PC-9 (cell line): ENCODE measurements at regions of chr6 and their contacts with region 1.

Region 1: GRCh38 chr6:24646782-24647181 is 791 bp upstream of the KIAA0319 start:
- DNase-seq: peak; percentile 61 to 97
- H3K4me3 ChIP-seq: peak overlapping the region; percentile 76
- H3K27ac ChIP-seq: peak overlapping the region; percentile 97
- H3K4me1 ChIP-seq: peaks cover 42% of the 10 kb centered on the region
- H3K27me3 ChIP-seq: no peaks in the 10 kb centered on the region
- CTCF ChIP-seq: no peak

Region 2: DNA sequence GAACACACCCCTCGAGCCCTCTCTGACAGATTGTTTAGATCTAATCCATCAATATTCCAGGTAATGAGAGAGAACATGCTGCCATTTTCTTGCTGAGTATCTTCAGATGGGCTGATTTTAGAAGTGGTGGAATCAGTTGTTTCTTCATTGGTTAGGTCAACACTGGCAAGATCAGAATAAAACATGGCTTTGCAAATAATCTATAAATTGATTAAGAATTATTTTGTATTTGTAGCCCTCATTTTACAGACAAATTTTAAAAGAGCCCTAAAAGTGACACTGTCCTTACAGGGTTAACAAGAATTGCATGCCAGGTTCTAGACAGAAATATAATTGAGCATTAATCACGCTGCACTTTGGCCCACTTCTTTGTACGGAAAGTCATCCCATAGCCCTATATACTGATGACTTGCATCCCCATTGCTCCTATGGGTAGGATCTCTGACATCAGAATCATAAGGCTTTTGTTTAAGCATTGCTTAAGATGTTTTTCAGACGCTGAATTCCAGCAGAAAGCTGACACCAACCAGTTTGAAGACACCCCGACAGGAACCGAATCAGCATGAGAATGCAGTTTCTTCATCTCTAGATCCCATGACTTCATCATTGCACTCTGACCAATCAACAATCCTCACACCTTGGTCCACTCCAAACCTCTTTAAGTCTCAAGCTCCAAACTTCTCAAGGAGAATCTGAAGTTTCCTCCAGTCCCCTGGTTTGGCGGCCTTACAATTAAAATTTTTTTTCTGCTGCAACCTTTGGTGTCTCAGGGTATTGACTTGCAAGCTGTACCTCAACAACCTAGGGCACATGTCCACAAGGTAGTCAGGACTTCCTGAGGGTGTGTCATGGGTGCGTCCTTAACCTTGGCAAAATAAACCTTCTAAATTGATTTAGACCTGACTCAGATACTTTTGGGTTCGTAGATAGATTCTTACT is 12.1 kb after region 1 on chr6:
- CTCF ChIA-PET with region 1: no interaction called
- POLR2A ChIA-PET with region 1: interaction called, 6 read pairs
- intact Hi-C with region 1: loop called (anchors 1 kb)
- DNase-seq: peak; percentile 75 to 99
- H3K4me3 ChIP-seq: peak overlapping the region; percentile 36
- H3K27ac ChIP-seq: peak overlapping the region; percentile 99
- H3K4me1 ChIP-seq: peaks cover 72% of the 10 kb centered on the region
- H3K27me3 ChIP-seq: no peaks in the 10 kb centered on the region
- CTCF ChIP-seq: no peak

Region 3: GRCh38 chr6:24666641-24667377 is 20.0 kb after region 1 on chr6 and contains the starts of genes ACOT13 and TDP2:
- CTCF ChIA-PET with region 1: no interaction called
- POLR2A ChIA-PET with region 1: interaction called, 4 read pairs
- intact Hi-C with region 1: loop called (anchors 1 kb)
- DNase-seq: peak; percentile 87 to 97
- H3K4me3 ChIP-seq: peak within 1 kb of the TSS; percentile 98
- H3K27ac ChIP-seq: peak within 1 kb of the TSS; percentile 97
- H3K4me1 ChIP-seq: peaks cover 39% of the 10 kb centered on the region
- H3K27me3 ChIP-seq: no peaks in the 10 kb centered on the region
- CTCF ChIP-seq: peak; percentile 55; the same call in 1 of the 2 replicates
- total RNA-seq, gene ACOT13: 70.9 and 79.2 TPM in 2 replicates
- total RNA-seq, gene TDP2: 83.0 and 95.8 TPM in 2 replicates

Region 4: DNA sequence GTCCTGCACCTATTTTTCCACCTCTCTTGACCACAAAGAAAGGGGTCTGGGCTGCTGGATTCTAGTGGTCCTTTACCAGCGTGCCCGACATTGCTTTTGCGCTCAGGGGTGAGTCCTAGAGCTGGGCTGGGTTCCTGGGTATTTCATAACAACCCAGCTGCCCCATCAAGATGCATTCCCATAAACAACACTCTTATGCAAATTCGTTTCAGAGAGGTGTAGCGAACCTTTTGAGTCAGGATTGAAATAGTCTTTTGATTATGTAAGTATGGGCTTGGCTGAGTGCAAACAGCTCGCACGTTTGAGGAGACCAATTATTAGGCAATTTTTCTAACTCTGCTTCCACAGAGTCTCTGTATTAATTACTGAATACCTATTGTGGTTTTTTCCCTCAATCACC is 33.8 kb after region 1 on chr6:
- CTCF ChIA-PET with region 1: no interaction called
- POLR2A ChIA-PET with region 1: no interaction called
- intact Hi-C with region 1: no loop called
- DNase-seq: no peak
- H3K4me3 ChIP-seq: no peak overlapping the region
- H3K27ac ChIP-seq: no peak overlapping the region
- H3K4me1 ChIP-seq: no peaks in the 10 kb centered on the region
- H3K27me3 ChIP-seq: no peaks in the 10 kb centered on the region
- CTCF ChIP-seq: no peak

Region 5: DNA sequence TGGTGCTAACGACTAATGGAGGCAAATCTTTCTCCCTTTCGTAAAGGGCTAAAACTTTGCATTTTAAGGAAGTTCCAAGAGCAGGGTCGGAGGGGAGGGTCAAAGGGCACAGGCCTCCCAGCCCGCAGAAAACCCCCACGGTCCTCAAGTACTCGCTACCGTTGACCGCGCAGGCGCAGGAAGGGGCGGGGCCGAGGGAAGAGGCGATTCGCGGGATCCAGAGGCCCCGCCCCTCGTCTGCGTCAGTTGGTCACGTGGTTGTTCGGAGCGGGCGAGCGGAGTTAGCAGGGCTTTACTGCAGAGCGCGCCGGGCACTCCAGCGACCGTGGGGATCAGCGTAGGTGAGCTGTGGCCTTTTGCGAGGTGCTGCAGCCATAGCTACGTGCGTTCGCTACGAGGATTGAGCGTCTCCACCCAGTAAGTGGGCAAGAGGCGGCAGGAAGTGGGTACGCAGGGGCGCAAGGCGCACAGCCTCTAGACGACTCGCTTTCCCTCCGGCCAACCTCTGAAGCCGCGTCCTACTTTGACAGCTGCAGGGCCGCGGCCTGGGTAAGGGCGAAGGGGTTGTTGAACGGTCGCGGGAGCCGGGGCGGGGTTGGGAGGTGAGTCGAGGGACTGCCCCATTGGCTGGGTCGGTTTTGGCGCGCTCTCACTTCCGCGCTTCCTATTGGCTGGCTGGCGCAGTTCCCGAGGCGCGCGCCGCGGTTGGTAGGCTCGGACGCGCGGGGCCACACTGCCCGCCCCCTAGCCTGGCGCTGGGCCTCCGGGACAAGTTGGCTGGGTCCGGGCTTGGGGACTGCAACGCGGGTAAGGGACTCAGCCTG is 128.1 kb after region 1 on chr6 and contains the start of gene GMNN:
- CTCF ChIA-PET with region 1: no interaction called
- POLR2A ChIA-PET with region 1: no interaction called
- intact Hi-C with region 1: loop called (anchors 5 kb)
- DNase-seq: peak; percentile 83 to 96
- H3K4me3 ChIP-seq: peak within 1 kb of the TSS; percentile 72
- H3K27ac ChIP-seq: peak within 1 kb of the TSS; percentile 65
- H3K4me1 ChIP-seq: peaks cover 43% of the 10 kb centered on the region
- H3K27me3 ChIP-seq: no peaks in the 10 kb centered on the region
- CTCF ChIP-seq: no peak
- total RNA-seq, gene GMNN: 53.1 and 54.8 TPM in 2 replicates

Region 6: DNA sequence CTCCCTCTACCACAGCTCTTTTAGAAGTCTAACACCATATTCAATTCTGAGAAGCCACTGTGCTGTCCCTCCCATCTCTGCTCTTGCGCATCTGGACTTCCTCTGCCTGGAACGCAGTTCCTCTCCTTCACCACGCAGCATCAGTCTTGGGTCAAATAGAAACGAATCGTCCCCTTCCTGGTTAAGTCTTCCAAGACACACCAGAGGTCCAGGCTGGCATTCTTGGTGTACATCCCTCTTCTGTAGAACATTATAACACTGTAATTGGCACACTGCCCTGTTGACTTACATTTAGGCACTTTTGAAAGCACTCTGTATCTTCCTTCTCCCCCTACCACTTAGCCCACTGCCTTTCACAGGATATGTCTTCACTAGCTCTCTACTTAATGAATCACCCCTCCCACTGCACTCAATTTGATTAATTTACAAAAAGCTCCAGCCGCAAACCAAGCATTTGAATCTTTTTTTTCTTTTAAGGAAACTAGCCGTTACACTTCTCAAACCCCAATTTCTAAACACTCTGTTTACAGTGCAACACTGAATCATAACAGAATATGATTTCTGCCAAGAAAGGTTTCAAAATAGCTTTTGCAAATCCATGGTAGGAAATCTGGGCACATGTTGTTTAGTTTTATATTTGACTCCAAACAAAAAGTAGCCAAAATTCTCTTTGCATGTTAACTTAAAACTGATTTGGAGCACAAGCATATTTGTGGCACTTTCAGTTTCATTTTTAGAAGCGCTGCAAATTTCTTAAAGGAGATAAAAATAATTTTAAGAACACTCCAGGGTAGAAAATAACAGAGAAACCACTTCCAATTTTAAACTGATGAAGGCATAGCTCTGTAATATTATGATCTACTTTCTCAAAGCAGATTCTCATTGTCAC is 491.7 kb after region 1 on chr6:
- CTCF ChIA-PET with region 1: no interaction called
- POLR2A ChIA-PET with region 1: no interaction called
- intact Hi-C with region 1: no loop called
- DNase-seq: peak in 1 of 2 experiments; percentile 24
- H3K4me3 ChIP-seq: peak overlapping the region; percentile 52
- H3K27ac ChIP-seq: peak overlapping the region; percentile 22; the same call in 1 of the 2 replicates
- H3K4me1 ChIP-seq: peaks cover 14% of the 10 kb centered on the region
- H3K27me3 ChIP-seq: no peaks in the 10 kb centered on the region
- CTCF ChIP-seq: no peak

Region 7: GRCh38 chr6:25413207-25413905 is 766.6 kb after region 1 on chr6:
- CTCF ChIA-PET with region 1: no interaction called
- POLR2A ChIA-PET with region 1: no interaction called
- intact Hi-C with region 1: no loop called
- DNase-seq: no peak
- H3K4me3 ChIP-seq: no peak overlapping the region
- H3K27ac ChIP-seq: no peak overlapping the region
- H3K4me1 ChIP-seq: peaks cover 6% of the 10 kb centered on the region; the same call in 1 of the 2 replicates
- H3K27me3 ChIP-seq: no peaks in the 10 kb centered on the region
- CTCF ChIP-seq: no peak